Prostate gland (tissue), 2 donors: ENCODE measurements at regions of chr1 and their contacts with region 1.

Region 1: DNA sequence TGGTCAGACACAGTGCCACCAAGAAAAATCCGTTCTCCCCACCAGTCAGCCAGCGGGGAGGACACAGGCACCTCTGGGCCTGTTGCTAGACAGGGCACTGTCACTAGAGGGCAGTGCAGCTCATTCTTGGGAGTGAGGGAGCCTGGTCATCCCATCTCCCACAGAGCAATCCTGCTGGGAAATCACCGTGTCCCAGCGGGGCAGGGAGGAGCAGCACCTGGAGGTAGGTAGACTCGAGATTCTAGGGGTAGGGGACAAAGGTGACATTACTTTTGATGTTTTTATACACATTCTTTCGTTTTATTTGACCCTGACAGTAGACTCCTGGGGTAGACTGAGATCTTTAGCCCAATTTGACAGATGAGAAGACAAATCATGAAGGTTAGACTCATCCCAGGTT is 6.7 kb upstream of the CAMK1G start:
- DNase-seq: peak; percentile 63
- H3K4me3 ChIP-seq: no peak overlapping the region
- H3K27ac ChIP-seq: no peak overlapping the region
- H3K4me1 ChIP-seq: no peaks in the 10 kb centered on the region
- H3K27me3 ChIP-seq: no peaks in the 10 kb centered on the region
- CTCF ChIP-seq: peak; percentile 64 to 90 (median 86)
- POLR2A ChIP-seq: no peak

Region 2: GRCh38 chr1:209497729-209498128 is 79.1 kb before region 1 on chr1:
- intact Hi-C with region 1: no loop called
- DNase-seq: no peak
- H3K4me3 ChIP-seq: no peak overlapping the region
- H3K27ac ChIP-seq: no peak overlapping the region
- H3K4me1 ChIP-seq: no peaks in the 10 kb centered on the region
- H3K27me3 ChIP-seq: no peaks in the 10 kb centered on the region
- CTCF ChIP-seq: no peak
- POLR2A ChIP-seq: no peak

Region 3: DNA sequence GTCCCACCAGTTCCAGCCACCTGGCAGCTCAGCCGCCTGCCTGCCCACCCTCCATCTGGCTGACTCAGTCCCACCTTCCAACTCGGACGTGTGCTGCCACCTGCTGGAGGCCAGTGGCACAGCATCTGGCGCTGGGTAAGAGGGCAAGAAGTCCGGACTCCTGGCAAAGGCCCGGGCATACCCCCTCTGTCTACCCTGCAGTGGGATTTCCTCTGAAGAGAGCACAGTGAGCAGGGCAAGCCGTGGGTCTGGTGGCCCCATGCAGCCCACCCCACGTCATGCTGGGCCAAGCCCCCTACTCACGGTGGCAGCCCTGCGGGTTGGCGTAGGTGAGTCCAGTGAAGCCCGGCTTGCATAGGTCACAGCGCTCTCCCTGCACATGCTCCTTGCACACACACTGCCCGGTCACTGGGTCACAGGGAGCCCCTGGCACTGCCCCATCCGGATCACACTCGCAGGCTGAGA is 51.0 kb after region 1 on chr1:
- intact Hi-C with region 1: loop called (anchors 5 kb)
- DNase-seq: peak; percentile 49
- H3K4me3 ChIP-seq: no peak overlapping the region
- H3K27ac ChIP-seq: no peak overlapping the region
- H3K4me1 ChIP-seq: no peaks in the 10 kb centered on the region
- H3K27me3 ChIP-seq: no peaks in the 10 kb centered on the region
- CTCF ChIP-seq: peak; percentile 85 to 95 (median 90)
- POLR2A ChIP-seq: no peak

Region 4: DNA sequence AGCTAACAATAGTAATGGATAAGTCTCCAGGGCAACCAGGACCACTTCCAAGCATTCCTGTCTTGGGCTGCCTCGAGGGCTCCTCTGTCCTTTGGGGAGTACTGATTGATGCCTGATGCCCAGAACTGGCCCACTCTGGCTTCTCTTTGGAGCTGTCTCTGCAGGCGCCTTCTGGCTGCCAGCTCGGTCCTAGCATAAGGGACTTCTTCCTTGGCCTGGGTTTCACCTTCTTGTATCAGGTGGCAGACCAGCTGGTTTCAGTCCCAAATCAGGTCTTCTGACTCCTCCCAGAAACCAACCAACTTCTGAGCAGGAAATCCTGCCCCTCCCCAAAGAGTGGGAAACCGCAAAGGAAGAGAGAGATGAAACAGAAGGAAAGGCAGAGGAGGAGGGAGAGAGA is 109.0 kb after region 1 on chr1:
- intact Hi-C with region 1: no loop called
- DNase-seq: no peak
- H3K4me3 ChIP-seq: no peak overlapping the region
- H3K27ac ChIP-seq: no peak overlapping the region
- H3K4me1 ChIP-seq: no peaks in the 10 kb centered on the region
- H3K27me3 ChIP-seq: no peaks in the 10 kb centered on the region
- CTCF ChIP-seq: no peak
- POLR2A ChIP-seq: no peak

Region 5: DNA sequence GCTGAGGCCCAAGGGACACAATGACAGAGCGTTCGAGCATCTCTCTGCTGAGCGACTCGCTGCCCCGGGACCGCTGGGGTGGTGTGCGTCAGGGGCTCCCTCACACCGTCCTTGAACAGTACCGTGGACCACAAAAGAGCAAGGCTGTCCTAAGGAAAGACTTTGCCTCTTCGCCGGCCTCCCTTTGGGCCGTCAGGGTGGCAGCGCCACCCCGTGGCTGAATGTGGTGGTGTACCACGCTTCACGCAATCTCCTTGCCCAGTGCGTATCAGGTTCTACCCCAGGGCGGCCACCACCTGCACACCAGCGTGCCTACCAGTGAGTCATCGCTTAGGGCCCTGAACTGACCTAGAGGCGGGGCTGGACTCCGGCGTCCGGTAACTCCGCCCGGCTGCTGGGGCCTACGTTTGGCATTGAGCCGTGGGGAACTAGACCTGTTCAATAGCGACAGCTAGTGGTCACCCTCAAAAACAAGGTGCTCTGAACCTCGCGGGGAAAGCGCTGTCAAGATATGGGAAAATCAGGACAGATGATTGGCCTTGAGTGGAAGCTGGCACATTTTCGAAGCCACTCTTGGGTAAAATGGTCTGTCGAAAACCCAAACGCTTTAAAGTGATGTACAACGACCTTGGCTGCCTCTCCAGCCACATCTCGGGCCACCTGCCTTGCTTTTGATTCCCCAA is 170.9 kb after region 1 on chr1:
- intact Hi-C with region 1: loop called (anchors 5 kb)
- DNase-seq: peak; percentile 89
- H3K4me3 ChIP-seq: peak overlapping the region in 1 of 2 donors; percentile 13
- H3K27ac ChIP-seq: peak overlapping the region; percentile 32 to 36
- H3K4me1 ChIP-seq: peaks cover 5% of the 10 kb centered on the region
- H3K27me3 ChIP-seq: no peaks in the 10 kb centered on the region
- CTCF ChIP-seq: peak; percentile 85 to 96 (median 87)
- POLR2A ChIP-seq: no peak